AG04449 (cell line): ENCODE measurements at regions of chr11 and their contacts with region 1.

Region 1: DNA sequence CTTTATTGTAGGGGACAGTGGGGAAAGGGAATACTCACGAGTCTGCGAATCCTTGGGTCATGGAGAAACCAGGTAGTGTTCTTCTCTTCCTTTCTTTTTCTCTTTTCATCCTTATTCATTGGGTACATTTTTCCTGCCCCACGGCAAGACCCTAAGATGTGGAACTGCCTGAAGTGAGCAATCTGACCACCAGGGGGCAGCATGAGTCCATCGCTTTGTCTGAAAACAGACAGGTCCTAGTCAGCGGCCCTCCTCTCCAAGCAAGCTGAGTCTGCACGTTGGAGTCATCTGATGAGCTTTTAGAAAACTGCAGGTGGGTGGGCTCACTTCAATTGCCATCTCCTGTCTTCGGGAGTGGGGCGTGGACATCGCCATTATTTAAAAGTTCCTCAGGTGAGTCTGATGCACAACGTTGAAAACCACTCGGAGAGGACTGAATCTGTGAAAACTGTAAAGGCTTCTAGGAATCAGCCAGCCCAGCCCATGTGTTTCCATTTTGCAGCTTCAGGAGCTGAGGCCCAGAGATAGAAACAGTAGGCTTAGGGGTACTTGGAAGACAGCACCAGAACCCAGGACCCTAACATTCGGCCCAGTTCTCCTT is 34.0 kb upstream of the FBXO3 start:
- DNase-seq: peak; percentile 26
- H3K4me3 ChIP-seq: no peak overlapping the region
- CTCF ChIP-seq: peak; percentile 87

Region 2: DNA sequence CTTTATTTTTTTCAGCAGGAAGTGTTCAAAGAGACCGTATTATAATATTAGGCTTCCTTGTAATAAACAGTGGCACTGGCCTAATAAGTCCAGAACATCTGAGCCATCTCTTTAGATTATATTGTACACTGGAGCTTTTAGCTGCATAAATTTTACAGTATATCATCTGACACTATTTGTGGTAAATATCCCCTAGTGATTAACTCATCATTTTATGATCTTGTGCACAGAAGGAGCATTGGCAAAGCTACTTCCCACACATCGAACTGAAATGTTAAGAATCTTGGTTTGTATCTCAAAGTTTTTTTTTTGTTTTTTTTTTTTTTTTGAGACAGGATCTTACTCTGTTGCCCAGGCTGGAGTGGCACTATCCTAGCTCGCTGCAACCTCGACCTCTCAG is 388.4 kb before region 1 on chr11:
- CTCF ChIA-PET with region 1: no interaction called
- POLR2A ChIA-PET with region 1: no interaction called
- DNase-seq: no peak
- H3K4me3 ChIP-seq: no peak overlapping the region
- CTCF ChIP-seq: no peak

Region 3: GRCh38 chr11:33773987-33774735 is 34.2 kb before region 1 on chr11 and contains the start of gene FBXO3:
- CTCF ChIA-PET with region 1: interaction called, 116 read pairs
- POLR2A ChIA-PET with region 1: no interaction called
- DNase-seq: no peak
- H3K4me3 ChIP-seq: peak within 1 kb of the TSS; percentile 85
- CTCF ChIP-seq: no peak

Region 4: GRCh38 chr11:33790040-33790439 is 18.3 kb before region 1 on chr11:
- CTCF ChIA-PET with region 1: interaction called, 116 read pairs
- POLR2A ChIA-PET with region 1: no interaction called
- DNase-seq: no peak
- H3K4me3 ChIP-seq: no peak overlapping the region
- CTCF ChIP-seq: no peak

Region 5: DNA sequence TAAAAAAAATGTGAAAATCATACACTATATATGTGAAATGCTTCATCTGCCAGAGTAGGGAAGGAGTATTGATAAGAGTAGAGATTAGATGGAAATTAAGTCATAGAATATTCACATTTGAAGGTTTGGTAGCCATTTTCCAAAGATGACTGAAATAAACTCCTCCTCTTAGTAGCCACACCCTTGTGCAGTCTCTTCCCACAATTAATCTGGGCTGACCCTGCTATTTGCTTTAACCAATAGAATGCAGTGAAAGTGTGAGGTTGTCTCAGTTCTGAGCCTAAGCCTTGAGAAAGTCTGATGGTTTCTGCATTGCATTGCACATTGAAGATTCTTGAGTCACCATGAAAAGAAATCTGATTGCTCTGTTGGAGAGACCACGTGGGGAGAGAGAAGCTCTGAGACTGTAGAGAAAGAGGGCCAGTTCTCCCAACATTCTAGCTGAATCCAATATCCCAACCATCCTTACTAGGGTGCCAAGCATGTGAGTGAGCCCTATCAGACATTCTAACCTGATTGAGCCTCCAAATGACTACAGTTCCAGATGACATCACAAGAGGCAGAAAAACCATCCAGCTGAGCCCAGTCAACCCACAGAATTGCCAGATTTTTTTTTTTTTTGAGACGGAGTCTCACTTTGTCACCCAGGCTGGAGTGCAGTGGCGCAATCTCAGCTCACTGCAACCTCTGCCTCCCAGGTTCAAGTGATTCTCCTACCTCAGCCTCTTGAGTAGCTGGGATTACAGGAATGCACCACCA is 213.8 kb after region 1 on chr11:
- CTCF ChIA-PET with region 1: no interaction called
- POLR2A ChIA-PET with region 1: no interaction called
- DNase-seq: no peak
- H3K4me3 ChIP-seq: no peak overlapping the region
- CTCF ChIP-seq: no peak